ENCODE measurements at regions of chr19 and their contacts with region 1.

Region 1: DNA sequence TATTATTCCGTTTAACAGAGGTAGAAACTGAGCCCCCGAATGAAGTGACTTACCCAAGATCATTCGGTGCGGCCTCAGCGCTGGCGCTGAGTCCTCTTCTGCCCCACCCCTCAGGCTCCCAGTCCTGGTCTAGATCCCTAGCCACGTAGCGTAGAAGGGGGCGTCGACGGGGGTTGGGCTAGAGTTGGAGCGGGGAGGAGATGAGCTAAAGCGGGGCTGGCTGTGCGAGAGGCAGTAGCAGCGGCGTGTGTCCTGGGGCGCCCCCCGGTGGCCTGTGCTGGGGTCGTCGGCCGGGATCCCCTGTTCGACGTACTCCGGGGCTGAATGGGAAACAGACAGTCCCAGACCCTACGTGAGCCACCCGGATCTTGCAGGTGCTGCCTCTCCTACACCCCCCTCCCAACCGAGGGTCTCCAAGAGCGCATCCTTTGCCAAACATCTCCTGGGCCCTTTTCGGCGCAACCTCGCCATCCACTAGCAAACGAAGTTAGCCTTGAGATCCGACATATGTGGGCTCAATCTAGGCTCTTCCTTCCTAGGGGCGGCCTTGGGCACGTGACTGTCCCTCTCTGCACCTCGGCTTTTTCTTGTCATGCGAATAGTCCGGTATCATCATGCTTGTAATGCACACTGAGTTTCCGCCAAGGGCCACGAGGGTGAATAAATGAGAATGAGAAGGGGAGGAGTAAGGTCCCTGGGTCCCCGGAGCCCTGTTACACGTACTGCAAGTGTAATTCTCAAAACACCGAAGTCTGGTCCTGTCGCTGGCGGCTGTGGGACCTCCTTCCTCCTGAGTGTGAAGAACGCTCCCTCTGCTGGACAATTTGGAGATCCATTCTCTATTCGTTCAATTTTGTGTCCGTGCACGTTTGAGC is 47.7 kb downstream of the CYP4F22 start:
- DNase-seq: peak; percentile 93 to 95 (median 94)
- ATAC-seq: peak; percentile 94 to 96
- H3K4me3 ChIP-seq: no peak overlapping the region
- H3K27ac ChIP-seq: no peak overlapping the region
- H3K4me1 ChIP-seq: no peaks in the 10 kb centered on the region
- H3K27me3 ChIP-seq: no peaks in the 10 kb centered on the region

Region 2: GRCh38 chr19:15091901-15092753 is 463.9 kb before region 1 on chr19:
- intact Hi-C with region 1: loop called (anchors 5 to 10 kb)
- DNase-seq: no peak
- ATAC-seq: peak in 1 of 2 donors; percentile 64
- H3K4me3 ChIP-seq: no peak overlapping the region
- H3K27ac ChIP-seq: no peak overlapping the region
- H3K4me1 ChIP-seq: no peaks in the 10 kb centered on the region
- H3K27me3 ChIP-seq: no peaks in the 10 kb centered on the region

Region 3: GRCh38 chr19:15177269-15178116 is 378.5 kb before region 1 on chr19:
- intact Hi-C with region 1: loop called (anchors 2 to 5 kb)
- DNase-seq: peak; percentile 81 to 94 (median 93)
- ATAC-seq: peak; percentile 79 to 86
- H3K4me3 ChIP-seq: peak overlapping the region; percentile 27
- H3K27ac ChIP-seq: no peak overlapping the region
- H3K4me1 ChIP-seq: no peaks in the 10 kb centered on the region
- H3K27me3 ChIP-seq: no peaks in the 10 kb centered on the region

Region 4: GRCh38 chr19:15264061-15264932 is 291.7 kb before region 1 on chr19:
- intact Hi-C with region 1: loop called in 2 of 4 experiments (anchors 10 kb)
- DNase-seq: peak; percentile 79 to 92 (median 91)
- ATAC-seq: peak; percentile 4 to 23
- H3K4me3 ChIP-seq: no peak overlapping the region
- H3K27ac ChIP-seq: no peak overlapping the region
- H3K4me1 ChIP-seq: peaks cover 23% of the 10 kb centered on the region
- H3K27me3 ChIP-seq: no peaks in the 10 kb centered on the region

Region 5: DNA sequence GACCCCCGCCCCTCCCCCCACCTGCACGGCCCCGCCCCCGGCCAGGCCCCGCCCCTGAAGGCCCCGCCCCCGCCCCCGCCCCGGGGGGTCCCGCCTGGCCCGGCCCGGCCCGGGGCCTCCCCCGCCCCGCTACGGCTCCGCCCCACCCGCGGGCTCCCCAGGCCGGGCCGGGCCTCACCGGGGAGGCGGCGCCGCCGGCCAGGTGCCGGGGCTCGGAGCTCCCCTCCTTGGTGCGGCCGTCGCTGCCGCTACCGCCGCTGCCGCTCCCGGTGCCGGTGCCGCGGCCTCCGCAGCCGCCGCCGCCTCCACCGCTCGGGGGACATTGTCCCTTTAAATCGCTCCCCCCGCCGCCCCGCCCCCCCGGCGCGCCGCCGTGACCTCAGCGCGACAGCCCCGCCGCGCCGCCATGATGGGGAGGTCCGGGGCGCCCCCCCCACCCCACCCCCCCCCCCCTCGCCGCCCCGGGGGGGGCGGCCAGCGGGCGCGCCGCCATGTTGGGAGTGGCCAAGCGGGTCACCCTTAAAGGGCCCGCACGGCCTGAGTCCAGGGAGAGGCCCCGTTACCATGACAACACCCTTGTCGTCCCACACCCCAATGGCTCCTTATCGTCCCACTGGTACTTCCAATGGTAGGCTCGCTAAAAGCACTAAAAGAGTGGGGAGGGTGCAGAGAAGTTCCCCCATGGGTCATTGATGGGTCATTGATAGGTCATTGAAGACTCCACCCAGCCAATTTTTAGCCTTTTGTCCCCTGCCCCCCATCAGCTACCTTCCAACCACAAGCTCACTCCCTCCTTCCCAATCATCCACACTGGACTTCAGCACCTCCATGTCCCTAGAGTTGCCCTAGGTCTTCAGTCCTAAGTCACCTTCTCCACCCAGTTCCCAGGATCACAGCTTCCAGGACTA is 106.1 kb before region 1 on chr19 and contains the start of gene WIZ:
- intact Hi-C with region 1: loop called in 1 of 4 experiments (anchors 10 kb)
- DNase-seq: peak; percentile 89 to 97 (median 96)
- ATAC-seq: peak; percentile 5 to 13
- H3K4me3 ChIP-seq: peak within 1 kb of the TSS; percentile 84
- H3K27ac ChIP-seq: peak within 1 kb of the TSS; percentile 90
- H3K4me1 ChIP-seq: peaks cover 4% of the 10 kb centered on the region
- H3K27me3 ChIP-seq: no peaks in the 10 kb centered on the region
- total RNA-seq, gene WIZ: 28.9 to 36.5 (median 33.3) TPM

Region 6: DNA sequence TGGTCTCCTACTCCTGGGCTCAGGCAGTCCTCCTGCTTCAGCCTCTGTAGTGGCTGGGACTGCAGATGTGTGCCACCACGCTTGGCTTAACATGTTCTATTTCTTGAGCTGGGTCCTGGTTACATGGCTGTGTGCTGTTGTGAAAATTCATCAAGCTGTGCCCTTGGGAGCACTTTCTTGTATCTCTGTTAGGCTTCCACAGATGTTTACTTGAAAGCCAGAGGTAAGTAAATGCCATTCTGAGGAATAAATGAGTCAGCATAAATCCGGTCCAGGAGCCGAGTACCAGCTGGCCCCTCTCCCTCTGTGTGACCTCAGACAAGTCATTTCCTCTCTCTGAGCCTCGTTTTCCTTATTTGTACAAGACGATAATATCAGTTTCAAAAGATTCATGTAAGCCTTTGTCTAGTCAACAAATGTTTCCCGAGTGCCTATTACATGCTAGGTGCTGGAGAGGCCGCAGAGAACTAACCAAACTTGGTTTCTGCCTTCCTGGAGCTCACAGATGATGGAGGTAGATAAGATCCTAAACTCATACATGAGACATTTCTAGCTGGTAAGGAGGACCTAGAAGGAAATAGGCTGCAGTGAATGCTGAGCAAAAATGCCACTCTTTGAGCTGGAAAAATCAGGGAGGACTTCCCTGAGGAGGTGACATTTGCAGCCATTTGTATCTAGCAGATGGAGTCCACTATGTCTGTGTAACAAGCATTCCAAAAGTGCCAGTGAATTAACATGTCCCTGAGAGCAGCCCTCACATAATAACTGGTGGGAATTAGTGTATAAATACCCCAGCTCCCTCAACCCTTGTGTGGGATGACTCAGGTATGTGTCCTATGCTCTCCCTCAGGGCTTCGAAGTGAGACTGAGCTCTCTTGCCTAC is 88.9 kb before region 1 on chr19:
- intact Hi-C with region 1: loop called in 1 of 4 experiments (anchors 10 kb)
- DNase-seq: no peak
- ATAC-seq: peak in 1 of 2 donors; percentile 60
- H3K4me3 ChIP-seq: no peak overlapping the region
- H3K27ac ChIP-seq: no peak overlapping the region
- H3K4me1 ChIP-seq: peaks cover 3% of the 10 kb centered on the region
- H3K27me3 ChIP-seq: no peaks in the 10 kb centered on the region